ENCODE measurements at regions of chr1 and their contacts with region 1.

Region 1: GRCh38 chr1:226054519-226055327 is 7.8 kb upstream of the H3-3A start:
- DNase-seq: no peak
- H3K4me3 ChIP-seq: no peak overlapping the region
- H3K27ac ChIP-seq: no peak overlapping the region
- H3K4me1 ChIP-seq: no peaks in the 10 kb centered on the region
- H3K27me3 ChIP-seq: no peaks in the 10 kb centered on the region
- CTCF ChIP-seq: no peak
- POLR2A ChIP-seq: no peak

Region 2: GRCh38 chr1:226001963-226002666 is 52.6 kb before region 1 on chr1:
- intact Hi-C with region 1: loop called in 1 of 2 experiments (anchors 5 kb)
- DNase-seq: peak; percentile 60 to 89 (median 76)
- H3K4me3 ChIP-seq: peak overlapping the region in 1 of 4 donors; percentile 5
- H3K27ac ChIP-seq: peak overlapping the region in 4 of 5 donors; percentile 30 to 89 (median 64)
- H3K4me1 ChIP-seq: peaks cover 18 to 23% of the 10 kb centered on the region in 2 donors
- H3K27me3 ChIP-seq: no peaks in the 10 kb centered on the region
- CTCF ChIP-seq: no peak
- POLR2A ChIP-seq: peak in 1 of 2 donors; percentile 26